ENCODE measurements at regions of chr19 and their contacts with region 1.

Region 1: GRCh38 chr19:19404879-19405860 is at the start of gene GATAD2A:
- DNase-seq: peak; percentile 91 to 94
- ATAC-seq: peak; percentile 77 to 86
- H3K4me3 ChIP-seq: peak within 1 kb of the TSS; percentile 82 to 91 (median 88)
- H3K27ac ChIP-seq: peak within 1 kb of the TSS; percentile 88 to 93 (median 93)
- H3K4me1 ChIP-seq: peaks cover 55 to 65% of the 10 kb centered on the region in 2 donors
- H3K27me3 ChIP-seq: no peaks in the 10 kb centered on the region
- CTCF ChIP-seq: peak in 3 of 5 experiments; percentile 41 to 48 (median 41)
- POLR2A ChIP-seq: peak; percentile 76 to 77
- total RNA-seq, gene GATAD2A: 17.7 to 51.4 (median 40.1) TPM

Region 2: GRCh38 chr19:19081642-19082151 is 323.5 kb before region 1 on chr19:
- in situ Hi-C with region 1: no loop called
- intact Hi-C with region 1: no loop called
- DNase-seq: peak; percentile 27 to 51
- ATAC-seq: peak; percentile 45 to 56
- H3K4me3 ChIP-seq: no peak overlapping the region
- H3K27ac ChIP-seq: peak overlapping the region; percentile 61 to 78 (median 64)
- H3K4me1 ChIP-seq: peaks cover 13 to 28% of the 10 kb centered on the region in 2 donors
- H3K27me3 ChIP-seq: no peaks in the 10 kb centered on the region
- CTCF ChIP-seq: no peak
- POLR2A ChIP-seq: peak in 1 of 2 donors; percentile 19

Region 3: GRCh38 chr19:19192078-19192882 is 212.9 kb before region 1 on chr19 and contains the starts of genes BORCS8 and RFXANK:
- in situ Hi-C with region 1: no loop called
- intact Hi-C with region 1: loop called (anchors 10 kb)
- DNase-seq: peak; percentile 99 to 100
- ATAC-seq: peak; percentile 98 to 100
- H3K4me3 ChIP-seq: peak within 1 kb of the TSS; percentile 83 to 99 (median 92)
- H3K27ac ChIP-seq: peak within 1 kb of the TSS; percentile 99 to 100 (median 100)
- H3K4me1 ChIP-seq: peaks cover 30 to 44% of the 10 kb centered on the region in 2 donors
- H3K27me3 ChIP-seq: no peaks in the 10 kb centered on the region
- CTCF ChIP-seq: peak in 2 of 5 experiments; percentile 9 to 18
- POLR2A ChIP-seq: peak; percentile 67 to 79
- total RNA-seq, gene BORCS8: 11.2 to 17.2 (median 13.3) TPM
- total RNA-seq, gene RFXANK: 25.5 to 44.1 (median 35.1) TPM

Region 4: GRCh38 chr19:19320362-19321142 is 84.6 kb before region 1 on chr19 and contains the starts of genes MAU2 and SUGP1:
- in situ Hi-C with region 1: no loop called
- intact Hi-C with region 1: loop called (anchors 5 kb)
- DNase-seq: peak; percentile 83 to 87
- ATAC-seq: peak; percentile 88 to 97
- H3K4me3 ChIP-seq: peak within 1 kb of the TSS; percentile 80 to 96 (median 93)
- H3K27ac ChIP-seq: peak within 1 kb of the TSS; percentile 88 to 98 (median 92)
- H3K4me1 ChIP-seq: peaks cover 48 to 57% of the 10 kb centered on the region in 2 donors
- H3K27me3 ChIP-seq: no peaks in the 10 kb centered on the region
- CTCF ChIP-seq: peak in 4 of 5 experiments; percentile 43 to 62 (median 48)
- POLR2A ChIP-seq: peak; percentile 28 to 75
- total RNA-seq, gene MAU2: 31.3 to 48.5 (median 41.7) TPM
- total RNA-seq, gene SUGP1: 29.7 to 51.0 (median 39.8) TPM

Region 5: GRCh38 chr19:19366612-19367396 is 38.4 kb before region 1 on chr19:
- in situ Hi-C with region 1: no loop called
- intact Hi-C with region 1: loop called (anchors 1 kb)
- DNase-seq: peak; percentile 18 to 70
- ATAC-seq: peak; percentile 84
- H3K4me3 ChIP-seq: no peak overlapping the region
- H3K27ac ChIP-seq: peak overlapping the region in 1 of 4 donors; percentile 22
- H3K4me1 ChIP-seq: no peaks in the 10 kb centered on the region
- H3K27me3 ChIP-seq: no peaks in the 10 kb centered on the region
- CTCF ChIP-seq: peak; percentile 90 to 96 (median 94)
- POLR2A ChIP-seq: no peak

Region 6: GRCh38 chr19:19385108-19385899 is 19.9 kb before region 1 on chr19:
- in situ Hi-C with region 1: no loop called
- intact Hi-C with region 1: loop called (anchors 1 kb)
- DNase-seq: peak; percentile 100
- ATAC-seq: peak; percentile 95 to 97
- H3K4me3 ChIP-seq: peak overlapping the region; percentile 73 to 96 (median 86)
- H3K27ac ChIP-seq: peak overlapping the region; percentile 81 to 93 (median 87)
- H3K4me1 ChIP-seq: peaks cover 37 to 47% of the 10 kb centered on the region in 2 donors
- H3K27me3 ChIP-seq: no peaks in the 10 kb centered on the region
- CTCF ChIP-seq: peak in 4 of 5 experiments; percentile 7 to 49 (median 34)
- POLR2A ChIP-seq: peak; percentile 46 to 49

Region 7: GRCh38 chr19:19434483-19435045 is 29.4 kb after region 1 on chr19:
- in situ Hi-C with region 1: no loop called
- intact Hi-C with region 1: no loop called
- DNase-seq: peak; percentile 51 to 73
- ATAC-seq: peak; percentile 93 to 94
- H3K4me3 ChIP-seq: peak overlapping the region in 1 of 4 donors; percentile 25
- H3K27ac ChIP-seq: peak overlapping the region; percentile 47 to 63 (median 56)
- H3K4me1 ChIP-seq: peaks cover 22 to 25% of the 10 kb centered on the region in 2 donors
- H3K27me3 ChIP-seq: no peaks in the 10 kb centered on the region
- CTCF ChIP-seq: no peak
- POLR2A ChIP-seq: no peak

Region 8: DNA sequence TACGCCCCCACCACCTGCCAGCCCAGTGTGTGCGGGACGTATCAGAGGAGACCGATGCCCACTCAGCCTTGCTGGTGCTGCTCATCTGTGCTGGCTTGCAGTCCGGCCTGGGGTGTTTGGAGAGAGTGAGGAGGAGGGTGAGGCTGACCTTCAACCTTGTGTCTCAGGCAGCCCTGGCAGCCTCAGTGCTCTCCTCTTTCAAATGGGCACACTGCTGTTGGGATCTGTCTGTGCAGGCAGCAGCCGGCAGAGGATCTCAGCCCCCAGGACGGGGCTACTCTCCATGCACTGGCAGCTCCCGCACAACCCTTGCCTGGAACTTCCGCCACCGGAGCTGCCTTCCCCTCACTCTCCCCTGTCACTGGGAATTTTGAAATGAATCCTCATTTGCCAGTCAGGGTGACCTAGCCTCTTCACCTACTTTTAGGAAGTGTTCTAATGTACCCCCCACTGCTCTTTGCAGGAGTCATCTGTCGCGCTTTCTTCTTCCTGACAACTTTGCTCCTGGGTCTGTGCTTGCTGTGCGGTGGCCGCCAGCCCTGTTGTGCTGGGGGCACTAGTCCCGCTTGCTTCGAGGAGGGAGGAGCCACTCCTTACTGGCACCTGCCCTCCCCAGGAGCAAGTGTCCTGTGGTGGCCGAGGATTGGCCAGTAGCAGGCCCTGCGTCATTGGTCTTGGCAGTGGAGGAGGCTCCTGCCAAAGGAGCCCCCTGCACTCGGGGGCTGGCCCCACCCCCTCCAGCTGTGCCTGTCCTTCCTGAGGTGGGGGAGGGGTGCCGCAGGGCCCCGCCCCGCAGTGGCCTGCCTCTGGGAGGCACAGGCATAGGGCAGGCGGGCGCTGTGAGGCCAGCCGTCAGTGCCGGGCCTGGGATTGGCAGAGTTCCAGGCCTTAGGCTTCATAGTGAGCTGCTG is 56.8 kb after region 1 on chr19:
- in situ Hi-C with region 1: no loop called
- intact Hi-C with region 1: loop called (anchors 1 kb)
- DNase-seq: peak; percentile 40 to 92
- ATAC-seq: peak; percentile 40 to 73
- H3K4me3 ChIP-seq: peak overlapping the region; percentile 14 to 39 (median 22)
- H3K27ac ChIP-seq: peak overlapping the region; percentile 58 to 85 (median 80)
- H3K4me1 ChIP-seq: peaks cover 68 to 71% of the 10 kb centered on the region in 2 donors
- H3K27me3 ChIP-seq: no peaks in the 10 kb centered on the region
- CTCF ChIP-seq: no peak
- POLR2A ChIP-seq: peak; percentile 18 to 62

Region 9: GRCh38 chr19:19488875-19489690 is 83.9 kb after region 1 on chr19:
- in situ Hi-C with region 1: no loop called
- intact Hi-C with region 1: loop called (anchors 1 kb)
- DNase-seq: peak; percentile 34 to 69
- ATAC-seq: peak; percentile 28 to 47
- H3K4me3 ChIP-seq: peak overlapping the region in 1 of 4 donors; percentile 25
- H3K27ac ChIP-seq: peak overlapping the region; percentile 44 to 77 (median 72)
- H3K4me1 ChIP-seq: peaks cover 35 to 40% of the 10 kb centered on the region in 2 donors
- H3K27me3 ChIP-seq: no peaks in the 10 kb centered on the region
- CTCF ChIP-seq: no peak
- POLR2A ChIP-seq: no peak

Measured in gastrocnemius medialis (tissue), 4 donors.